ENCODE measurements at regions of chr1 and their contacts with region 1.

Region 1: DNA sequence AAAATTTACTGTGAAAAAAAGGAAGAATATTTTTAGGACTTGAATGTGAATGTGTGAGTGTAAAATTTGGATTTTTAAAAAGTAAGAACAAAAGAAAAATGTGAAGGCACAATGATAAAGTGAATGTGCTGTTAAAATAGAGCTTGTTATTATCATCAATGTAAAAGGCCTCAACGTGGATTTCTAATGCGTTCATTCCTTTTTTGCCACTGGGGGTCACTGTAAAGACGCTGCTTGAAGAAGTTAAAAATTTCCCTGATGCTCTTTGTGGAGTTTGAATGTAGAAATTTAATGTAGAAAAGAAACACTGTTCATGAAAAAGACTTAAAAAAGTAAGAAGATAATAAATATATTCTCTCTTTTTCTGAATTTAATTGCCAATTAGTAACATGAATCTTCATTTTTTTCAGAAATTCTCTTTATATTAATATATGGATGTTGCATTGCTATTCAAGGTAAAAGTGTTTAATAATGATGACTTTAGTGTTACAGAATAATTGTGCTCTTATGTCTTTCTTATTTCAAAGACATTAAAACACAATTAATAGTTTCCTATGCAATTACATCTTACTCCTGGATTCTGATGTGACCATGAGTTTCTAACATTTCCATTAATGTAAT is 161.5 kb downstream of the DNM3 start:
- DNase-seq: peak; percentile 60
- H3K4me3 Mint-ChIP-seq: no peak overlapping the region
- H3K27ac Mint-ChIP-seq: no peak overlapping the region
- H3K4me1 Mint-ChIP-seq: peaks cover 41% of the 10 kb centered on the region
- H3K27me3 Mint-ChIP-seq: no peaks in the 10 kb centered on the region
- CTCF ChIP-seq: peak; percentile 49

Region 2: GRCh38 chr1:172089768-172090510 is 87.1 kb after region 1 on chr1:
- CTCF ChIA-PET with region 1: interaction called, 3 read pairs
- intact Hi-C with region 1: loop called (anchors 2 kb)
- DNase-seq: peak; percentile 83
- H3K4me3 Mint-ChIP-seq: no peak overlapping the region
- H3K27ac Mint-ChIP-seq: no peak overlapping the region
- H3K4me1 Mint-ChIP-seq: peaks cover 11% of the 10 kb centered on the region
- H3K27me3 Mint-ChIP-seq: no peaks in the 10 kb centered on the region
- CTCF ChIP-seq: peak; percentile 86

Region 3: GRCh38 chr1:172254521-172255222 is 251.8 kb after region 1 on chr1:
- CTCF ChIA-PET with region 1: no interaction called
- intact Hi-C with region 1: loop called (anchors 5 kb)
- DNase-seq: peak; percentile 24
- H3K4me3 Mint-ChIP-seq: no peak overlapping the region
- H3K27ac Mint-ChIP-seq: peak overlapping the region; percentile 32
- H3K4me1 Mint-ChIP-seq: peaks cover 30% of the 10 kb centered on the region
- H3K27me3 Mint-ChIP-seq: no peaks in the 10 kb centered on the region
- CTCF ChIP-seq: no peak

Region 4: GRCh38 chr1:172429331-172430127 is 426.7 kb after region 1 on chr1:
- CTCF ChIA-PET with region 1: interaction called, 7 read pairs
- intact Hi-C with region 1: loop called (anchors 1 kb)
- DNase-seq: peak; percentile 56
- H3K4me3 Mint-ChIP-seq: no peak overlapping the region
- H3K27ac Mint-ChIP-seq: no peak overlapping the region
- H3K4me1 Mint-ChIP-seq: peaks cover 15% of the 10 kb centered on the region
- H3K27me3 Mint-ChIP-seq: no peaks in the 10 kb centered on the region
- CTCF ChIP-seq: peak; percentile 78

Region 5: DNA sequence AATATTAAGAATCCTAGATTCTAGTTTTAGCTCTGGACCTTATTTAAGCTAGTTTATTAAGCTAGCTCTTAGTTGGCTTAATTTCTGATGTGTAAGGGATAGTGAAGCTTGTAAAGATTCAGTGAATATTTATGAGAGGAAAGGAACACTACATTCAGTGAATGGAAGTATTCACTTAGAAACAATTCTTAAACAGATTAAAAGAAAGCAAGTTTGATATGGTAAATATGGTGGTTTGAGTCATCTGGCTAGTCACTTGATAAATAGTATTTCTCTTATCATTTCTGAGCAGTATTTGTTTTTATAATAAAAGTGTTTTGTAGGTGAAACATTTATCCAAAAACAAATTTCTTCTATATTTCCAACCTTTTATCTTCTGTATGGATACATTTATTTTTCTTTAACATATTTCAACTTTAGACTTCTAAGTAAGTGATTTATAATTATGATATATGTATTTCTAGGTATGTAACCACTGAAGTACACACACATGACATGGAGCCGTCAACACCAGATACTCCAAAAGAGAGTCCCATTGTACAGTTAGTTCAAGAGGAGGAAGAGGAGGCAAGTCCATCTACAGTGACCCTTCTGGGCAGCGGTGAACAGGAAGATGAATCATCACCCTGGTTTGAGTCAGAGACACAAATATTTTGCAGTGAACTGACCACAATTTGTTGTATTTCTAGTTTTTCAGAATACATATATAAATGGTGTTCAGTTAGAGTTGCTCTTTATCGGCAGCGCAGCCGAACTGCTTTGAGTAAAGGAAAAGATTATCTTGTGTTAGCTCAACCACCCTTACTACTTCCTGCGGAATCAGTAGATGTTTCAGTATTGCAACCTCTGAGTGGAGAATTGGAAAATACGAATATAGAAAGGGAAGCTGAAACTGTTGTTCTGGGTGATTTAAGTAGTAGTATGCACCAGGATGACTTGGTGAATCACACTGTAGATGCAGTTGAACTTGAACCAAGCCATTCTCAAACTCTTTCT is 585.8 kb after region 1 on chr1:
- CTCF ChIA-PET with region 1: no interaction called
- intact Hi-C with region 1: loop called (anchors 10 kb)
- DNase-seq: peak; percentile 69
- H3K4me3 Mint-ChIP-seq: peak overlapping the region; percentile 60
- H3K27ac Mint-ChIP-seq: peak overlapping the region; percentile 96
- H3K4me1 Mint-ChIP-seq: peaks cover 49% of the 10 kb centered on the region
- H3K27me3 Mint-ChIP-seq: no peaks in the 10 kb centered on the region
- CTCF ChIP-seq: no peak